Right cardiac atrium (tissue), 5 donors: ENCODE measurements at regions of chr3 and their contacts with region 1.

Region 1: DNA sequence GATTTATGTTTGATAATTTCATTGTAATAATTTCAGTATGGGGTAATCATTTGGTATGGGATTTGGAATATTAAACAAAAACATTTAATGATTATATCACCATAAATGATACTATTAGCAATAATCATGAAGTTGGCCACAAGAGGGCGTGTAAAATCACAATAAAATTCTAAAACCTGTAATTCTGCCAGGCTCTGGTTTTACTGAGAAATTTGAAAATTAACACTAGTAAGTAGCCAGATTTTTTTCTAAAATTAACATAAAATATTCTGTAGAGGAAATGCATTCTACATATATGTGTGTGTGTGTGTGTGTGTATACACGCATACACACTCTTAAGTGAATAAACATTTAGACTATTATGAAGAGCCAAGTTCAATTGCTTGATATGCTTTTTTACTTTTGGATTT is 40.5 kb downstream of the FEZF2 start:
- DNase-seq: no peak
- ATAC-seq: no peak
- H3K4me3 ChIP-seq: no peak overlapping the region
- H3K27ac ChIP-seq: no peak overlapping the region
- H3K4me1 ChIP-seq: no peaks in the 10 kb centered on the region
- H3K27me3 ChIP-seq: no peaks in the 10 kb centered on the region

Region 2: GRCh38 chr3:62558549-62559112 is 225.8 kb after region 1 on chr3:
- intact Hi-C with region 1: loop called in 3 of 4 experiments (anchors 10 kb)
- DNase-seq: no peak
- ATAC-seq: no peak
- H3K4me3 ChIP-seq: no peak overlapping the region
- H3K27ac ChIP-seq: no peak overlapping the region
- H3K4me1 ChIP-seq: no peaks in the 10 kb centered on the region
- H3K27me3 ChIP-seq: no peaks in the 10 kb centered on the region